K562 (cell line): ENCODE measurements at regions of chr3 and their contacts with region 1.

Region 1: GRCh38 chr3:159884661-159885402 is 103.8 kb upstream of the IL12A start:
- DNase-seq: peak; percentile 11 to 18 (median 16)
- ATAC-seq: peak; percentile 70
- H3K4me3 ChIP-seq: no peak overlapping the region
- H3K27ac ChIP-seq: no peak overlapping the region
- H3K4me1 ChIP-seq: no peaks in the 10 kb centered on the region
- H3K27me3 ChIP-seq: 0 out of 5 replicates have a peak, but pooled peaks cover 0 to 3% of the 10 kb centered on the region in 2 experiments
- CTCF ChIP-seq: peak; percentile 15 to 61 (median 38); a peak in 4 of 6 replicates
- EP300 ChIP-seq: no peak
- POLR2A ChIP-seq: no peak
- RAD21 ChIP-seq: peak; percentile 43 to 61; a peak in 3 of 4 replicates

Region 2: GRCh38 chr3:159867372-159867771 is 17.5 kb before region 1 on chr3:
- CTCF ChIA-PET with region 1: no interaction called
- POLR2A ChIA-PET with region 1: no interaction called
- in situ Hi-C with region 1: no loop called
- intact Hi-C with region 1: no loop called
- DNase-seq: no peak
- ATAC-seq: no peak
- H3K4me3 ChIP-seq: no peak overlapping the region
- H3K27ac ChIP-seq: no peak overlapping the region
- H3K4me1 ChIP-seq: no peaks in the 10 kb centered on the region
- H3K27me3 ChIP-seq: no peaks in the 10 kb centered on the region
- CTCF ChIP-seq: no peak
- EP300 ChIP-seq: no peak
- POLR2A ChIP-seq: no peak
- RAD21 ChIP-seq: no peak

Region 3: DNA sequence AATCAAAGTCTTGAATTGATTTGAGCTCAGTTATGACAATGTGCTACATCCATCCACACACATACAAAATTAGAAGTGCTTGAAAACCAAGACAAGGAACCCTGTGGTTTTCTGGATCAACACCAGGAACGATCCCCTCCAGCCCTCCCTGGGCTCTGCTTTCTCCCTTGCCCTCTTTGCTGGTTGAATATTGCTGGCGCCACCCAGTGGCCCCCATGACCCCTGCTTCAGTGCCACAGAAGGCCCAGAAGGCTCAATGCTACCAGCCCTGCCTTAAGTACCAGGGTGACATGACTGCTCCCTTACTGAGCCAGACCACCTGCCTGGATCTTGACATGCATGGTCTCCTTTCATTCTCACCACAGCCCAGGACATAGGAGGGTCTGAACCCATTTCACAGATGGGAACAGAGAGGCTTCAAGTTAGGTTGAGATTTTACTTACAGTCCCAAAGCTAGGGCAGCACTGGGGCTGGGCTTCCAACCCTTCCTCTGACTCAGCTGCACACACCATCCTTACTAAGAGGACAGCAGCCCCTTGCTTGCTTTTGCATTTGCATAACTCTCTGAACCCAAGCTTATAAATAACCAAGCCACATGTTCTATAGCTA is 118.8 kb after region 1 on chr3:
- CTCF ChIA-PET with region 1: interaction called, 5 read pairs
- POLR2A ChIA-PET with region 1: no interaction called
- in situ Hi-C with region 1: no loop called
- intact Hi-C with region 1: loop called (anchors 5 kb)
- DNase-seq: peak in 3 of 4 experiments; percentile 16 to 34 (median 22)
- ATAC-seq: peak; percentile 86
- H3K4me3 ChIP-seq: no peak overlapping the region
- H3K27ac ChIP-seq: no peak overlapping the region
- H3K4me1 ChIP-seq: no peaks in the 10 kb centered on the region
- H3K27me3 ChIP-seq: peaks cover 0 to 2% of the 10 kb centered on the region in 2 experiments; a peak in 1 of 5 replicates
- CTCF ChIP-seq: peak; percentile 35 to 50 (median 44); a peak in 5 of 6 replicates
- EP300 ChIP-seq: no peak
- POLR2A ChIP-seq: no peak
- RAD21 ChIP-seq: peak; percentile 26 to 51; a peak in 2 of 4 replicates

Region 4: GRCh38 chr3:160099834-160100233 is 215.0 kb after region 1 on chr3:
- CTCF ChIA-PET with region 1: no interaction called
- POLR2A ChIA-PET with region 1: no interaction called
- in situ Hi-C with region 1: no loop called
- intact Hi-C with region 1: no loop called
- DNase-seq: no peak
- ATAC-seq: no peak
- H3K4me3 ChIP-seq: no peak overlapping the region
- H3K27ac ChIP-seq: no peak overlapping the region
- H3K4me1 ChIP-seq: no peaks in the 10 kb centered on the region
- H3K27me3 ChIP-seq: peaks cover 0 to 13% of the 10 kb centered on the region in 2 experiments; a peak in 2 of 5 replicates
- CTCF ChIP-seq: no peak
- EP300 ChIP-seq: no peak
- POLR2A ChIP-seq: no peak
- RAD21 ChIP-seq: no peak

Region 5: GRCh38 chr3:160129459-160130061 is 244.7 kb after region 1 on chr3:
- CTCF ChIA-PET with region 1: no interaction called
- POLR2A ChIA-PET with region 1: no interaction called
- in situ Hi-C with region 1: no loop called
- intact Hi-C with region 1: loop called (anchors 10 kb)
- DNase-seq: no peak
- ATAC-seq: no peak
- H3K4me3 ChIP-seq: no peak overlapping the region
- H3K27ac ChIP-seq: no peak overlapping the region
- H3K4me1 ChIP-seq: no peaks in the 10 kb centered on the region; a peak in 1 of 5 replicates
- H3K27me3 ChIP-seq: 0 out of 5 replicates have a peak, but pooled peaks cover 0 to 3% of the 10 kb centered on the region in 2 experiments
- CTCF ChIP-seq: no peak
- EP300 ChIP-seq: no peak
- POLR2A ChIP-seq: no peak
- RAD21 ChIP-seq: no peak

Region 6: GRCh38 chr3:160343132-160343531 is 458.3 kb after region 1 on chr3:
- CTCF ChIA-PET with region 1: no interaction called
- POLR2A ChIA-PET with region 1: no interaction called
- in situ Hi-C with region 1: no loop called
- intact Hi-C with region 1: loop called (anchors 5 kb)
- DNase-seq: peak in 2 of 4 experiments; percentile 10 to 12
- ATAC-seq: no peak
- H3K4me3 ChIP-seq: no peak overlapping the region
- H3K27ac ChIP-seq: no peak overlapping the region
- H3K4me1 ChIP-seq: no peaks in the 10 kb centered on the region
- H3K27me3 ChIP-seq: no peaks in the 10 kb centered on the region
- CTCF ChIP-seq: peak in 2 of 3 experiments; percentile 35 to 63; a peak in 3 of 6 replicates
- EP300 ChIP-seq: no peak
- POLR2A ChIP-seq: no peak
- RAD21 ChIP-seq: peak; percentile 82 to 85

Region 7: DNA sequence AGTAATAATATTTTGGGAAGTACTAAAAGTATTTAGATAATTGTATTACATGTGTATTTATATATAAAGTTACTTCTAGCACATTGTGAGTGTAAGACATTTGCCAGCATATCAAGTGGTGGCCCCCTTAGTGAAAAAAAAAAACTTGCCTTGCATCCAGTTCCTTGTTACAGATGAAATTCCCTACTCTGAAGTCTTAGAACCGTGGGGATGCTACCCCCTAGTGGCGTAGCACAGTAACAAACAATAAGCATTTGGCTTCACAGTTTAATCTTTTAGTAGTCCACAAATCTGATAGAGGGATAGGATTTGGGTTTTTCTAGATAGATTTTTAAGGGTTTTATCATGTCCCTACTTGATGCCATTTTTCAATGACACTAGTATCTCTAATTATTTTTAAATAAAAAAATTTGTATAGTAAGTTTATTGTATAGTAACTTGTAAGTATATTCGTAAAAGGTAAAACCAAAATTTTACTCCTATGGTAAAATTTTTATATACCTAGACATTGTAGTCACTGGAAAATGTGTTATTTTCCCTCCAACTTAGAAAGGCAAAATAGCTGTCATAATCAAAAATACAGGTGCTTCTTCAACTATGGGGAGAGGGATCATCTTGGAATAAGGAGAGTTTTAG is 528.9 kb after region 1 on chr3:
- CTCF ChIA-PET with region 1: no interaction called
- POLR2A ChIA-PET with region 1: interaction called, 3 read pairs
- in situ Hi-C with region 1: no loop called
- intact Hi-C with region 1: loop called (anchors 5 kb)
- DNase-seq: peak; percentile 56 to 80 (median 58)
- ATAC-seq: peak; percentile 82
- H3K4me3 ChIP-seq: no peak overlapping the region
- H3K27ac ChIP-seq: no peak overlapping the region
- H3K4me1 ChIP-seq: no peaks in the 10 kb centered on the region
- H3K27me3 ChIP-seq: no peaks in the 10 kb centered on the region
- CTCF ChIP-seq: peak; percentile 58 to 77 (median 75)
- EP300 ChIP-seq: no peak
- POLR2A ChIP-seq: no peak
- RAD21 ChIP-seq: peak; percentile 60 to 79

Region 8: GRCh38 chr3:161796780-161797179 is 1911.9 kb after region 1 on chr3:
- CTCF ChIA-PET with region 1: no interaction called
- POLR2A ChIA-PET with region 1: no interaction called
- in situ Hi-C with region 1: loop called (anchors 10 kb)
- intact Hi-C with region 1: no loop called
- DNase-seq: no peak
- ATAC-seq: no peak
- H3K4me3 ChIP-seq: no peak overlapping the region
- H3K27ac ChIP-seq: no peak overlapping the region
- H3K4me1 ChIP-seq: no peaks in the 10 kb centered on the region
- H3K27me3 ChIP-seq: no peaks in the 10 kb centered on the region
- CTCF ChIP-seq: no peak
- EP300 ChIP-seq: no peak
- POLR2A ChIP-seq: no peak
- RAD21 ChIP-seq: no peak